Activated CD4-positive, alpha-beta memory T cell treated with anti-CD3 and anti-CD28 coated beads, Interleukin-2, amount 10 ng/mL, durations not matched to agents 7 days and 5 days (primary cell): ENCODE measurements at regions of chr20 and their contacts with region 1.

Region 1: GRCh38 chr20:25407311-25408169 is at the start of gene GINS1:
- DNase-seq: peak; percentile 86
- H3K4me3 Mint-ChIP-seq: peak within 1 kb of the TSS; percentile 90
- H3K27ac Mint-ChIP-seq: peak within 1 kb of the TSS; percentile 79
- H3K4me1 Mint-ChIP-seq: peaks cover 34% of the 10 kb centered on the region
- H3K27me3 Mint-ChIP-seq: no peaks in the 10 kb centered on the region
- total RNA-seq, gene GINS1: 27.5 to 28.0 TPM

Region 2: DNA sequence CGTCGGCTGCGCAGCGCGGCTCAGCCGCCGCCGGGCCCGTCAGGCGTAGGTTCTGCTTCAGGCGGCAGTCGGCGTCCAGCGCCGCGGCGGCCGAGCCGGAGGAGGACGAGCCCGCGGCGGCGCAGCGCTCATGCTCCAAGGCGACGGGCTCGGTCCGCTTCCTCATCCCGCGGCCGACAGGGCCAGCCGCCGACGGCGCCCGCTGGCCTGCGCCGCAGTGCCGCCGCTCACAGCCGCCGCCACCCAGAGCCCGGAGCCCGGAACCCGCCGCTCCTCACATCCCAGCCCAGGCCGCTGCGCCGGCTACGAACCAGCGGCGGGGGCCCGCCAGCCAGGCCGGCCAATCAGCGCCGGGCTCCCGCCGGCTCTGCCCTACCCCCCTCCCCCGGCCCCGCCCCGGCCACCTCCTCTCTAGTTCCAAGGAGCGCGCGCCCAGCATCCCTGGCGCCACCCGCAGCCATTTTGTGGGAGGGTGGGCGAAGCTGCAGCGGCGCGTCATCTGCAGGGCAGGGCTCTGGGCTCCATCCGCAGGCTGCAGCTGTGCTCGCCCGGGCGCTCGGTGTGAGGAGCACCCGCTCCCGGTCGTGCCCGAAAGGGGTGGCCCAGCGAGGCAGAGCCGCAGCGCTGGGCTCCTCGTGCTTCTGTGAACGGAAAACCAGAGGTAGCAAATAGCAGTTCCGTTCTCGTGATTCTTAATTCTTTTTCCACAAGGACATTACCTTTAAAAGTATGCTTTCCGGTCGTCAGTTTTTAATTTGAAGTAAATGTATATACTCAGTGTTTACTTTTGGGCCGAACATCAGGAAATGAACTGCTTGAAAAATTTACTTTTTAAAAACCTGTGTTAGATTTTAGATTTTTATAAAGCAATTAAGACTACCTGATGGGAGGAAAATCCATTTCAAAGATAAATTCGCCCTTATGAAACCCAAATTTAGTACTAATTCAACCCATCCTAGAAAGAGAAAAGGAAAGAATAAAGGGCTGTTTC is 16.7 kb before region 1 on chr20 and contains the start of gene ABHD12:
- CTCF ChIA-PET with region 1: interaction called, 5 read pairs
- POLR2A ChIA-PET with region 1: interaction called, 19 read pairs
- DNase-seq: peak; percentile 97
- H3K4me3 Mint-ChIP-seq: peak within 1 kb of the TSS; percentile 85
- H3K27ac Mint-ChIP-seq: peak within 1 kb of the TSS; percentile 91
- H3K4me1 Mint-ChIP-seq: peaks cover 18% of the 10 kb centered on the region
- H3K27me3 Mint-ChIP-seq: peaks cover 2% of the 10 kb centered on the region
- total RNA-seq, gene ABHD12: 30.8 to 31.7 TPM